Panc1 (cell line): ENCODE measurements at regions of chr1 and their contacts with region 1.

Region 1: DNA sequence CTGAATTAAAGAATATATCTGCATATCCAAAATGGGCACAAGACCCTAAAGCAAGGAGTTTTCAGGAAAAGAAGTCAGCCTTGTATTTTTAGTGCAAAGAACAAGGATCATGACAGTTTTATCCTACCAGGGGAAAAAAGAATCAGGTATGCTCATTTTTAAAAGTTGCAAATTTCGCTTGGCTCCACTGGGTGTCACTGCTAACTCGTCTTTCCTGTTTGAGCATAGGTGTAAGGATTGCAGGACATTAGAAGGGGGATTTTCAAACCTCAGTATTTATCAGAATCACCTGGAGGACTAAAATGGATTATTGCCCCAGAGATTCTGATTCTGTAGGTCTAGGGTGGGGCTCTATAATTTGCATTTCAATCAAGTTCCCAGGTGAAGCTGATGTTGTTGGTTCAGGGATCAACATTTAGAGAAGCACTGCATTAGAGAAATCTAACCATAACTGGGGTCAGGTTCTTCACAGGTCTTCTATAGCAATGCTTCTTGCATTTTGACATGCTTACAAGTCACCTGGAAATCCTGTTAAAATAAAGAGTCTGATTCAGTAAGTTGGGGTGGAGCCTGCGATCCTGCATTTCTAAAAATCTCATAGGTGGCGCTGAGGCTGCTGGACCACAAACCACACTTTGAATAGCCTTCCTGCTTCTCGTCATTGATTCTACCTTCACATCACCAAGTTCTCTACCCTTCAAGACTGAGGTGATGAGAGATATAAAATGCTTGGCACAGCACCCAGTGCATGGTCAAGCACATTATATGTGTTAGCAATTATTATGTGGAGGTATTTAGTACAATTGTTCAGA is 39.6 kb downstream of the NUF2 start:
- DNase-seq: no peak
- ATAC-seq: peak; percentile 84
- H3K4me3 ChIP-seq: no peak overlapping the region
- H3K27ac ChIP-seq: no peak overlapping the region
- H3K4me1 ChIP-seq: no peaks in the 10 kb centered on the region
- H3K27me3 ChIP-seq: no peaks in the 10 kb centered on the region; the same call in 1 of the 2 replicates
- CTCF ChIP-seq: peak; percentile 71

Region 2: DNA sequence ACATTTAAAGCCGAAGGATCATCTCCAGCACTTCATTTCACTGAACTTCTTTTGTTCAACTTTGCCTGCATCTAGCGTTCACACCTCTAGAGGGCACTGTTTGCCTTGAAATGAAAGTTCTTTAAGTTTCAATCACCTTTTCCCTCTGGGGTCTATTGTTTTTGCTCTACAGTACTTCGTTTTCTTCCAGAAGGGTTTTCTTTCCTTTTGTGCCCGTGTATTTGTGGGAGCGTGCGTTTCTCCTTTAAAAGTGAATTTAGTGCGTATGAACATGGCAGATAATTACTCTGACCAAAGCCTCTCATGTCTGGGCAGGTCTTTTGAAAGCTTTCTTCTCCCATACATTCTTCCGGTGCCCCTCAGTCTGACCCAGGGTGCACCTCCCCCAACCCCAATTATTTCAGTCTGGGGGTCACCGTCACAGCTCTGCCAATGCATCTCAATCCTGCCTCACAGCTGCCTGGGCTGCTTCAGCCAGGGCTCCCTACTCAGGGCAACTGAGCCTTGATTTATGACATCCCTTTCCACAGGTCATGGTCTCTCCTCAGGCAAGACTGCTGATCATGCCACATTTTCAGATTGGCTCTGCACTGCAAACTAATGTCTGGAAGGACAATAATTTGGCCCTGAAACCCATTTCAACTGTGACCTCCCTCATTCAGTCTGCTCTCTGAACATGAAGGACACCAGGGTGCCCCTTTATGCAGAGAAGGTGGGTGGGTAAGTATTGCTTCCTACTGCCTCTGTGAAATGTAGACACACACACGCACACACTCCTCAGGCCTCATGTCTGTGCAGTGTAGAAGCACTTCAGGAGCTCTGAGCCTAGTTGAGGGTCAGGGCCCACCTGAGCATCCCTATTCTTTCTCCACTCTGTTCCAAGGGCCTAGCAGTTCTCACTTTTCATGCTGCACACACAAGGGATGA is 49.0 kb after region 1 on chr1:
- CTCF ChIA-PET with region 1: no interaction called
- POLR2A ChIA-PET with region 1: no interaction called
- in situ Hi-C with region 1: no loop called
- intact Hi-C with region 1: no loop called
- DNase-seq: peak; percentile 22
- ATAC-seq: peak; percentile 54; the same call in 1 of the 2 replicates
- H3K4me3 ChIP-seq: no peak overlapping the region
- H3K27ac ChIP-seq: no peak overlapping the region
- H3K4me1 ChIP-seq: no peaks in the 10 kb centered on the region
- H3K27me3 ChIP-seq: no peaks in the 10 kb centered on the region
- CTCF ChIP-seq: peak; percentile 81

Region 3: GRCh38 chr1:163528710-163529348 is 167.5 kb after region 1 on chr1:
- CTCF ChIA-PET with region 1: no interaction called
- POLR2A ChIA-PET with region 1: no interaction called
- in situ Hi-C with region 1: no loop called
- intact Hi-C with region 1: loop called (anchors 5 kb)
- DNase-seq: peak; percentile 10
- ATAC-seq: no peak; the same call in 1 of the 2 replicates
- H3K4me3 ChIP-seq: no peak overlapping the region
- H3K27ac ChIP-seq: no peak overlapping the region
- H3K4me1 ChIP-seq: no peaks in the 10 kb centered on the region
- H3K27me3 ChIP-seq: no peaks in the 10 kb centered on the region
- CTCF ChIP-seq: peak; percentile 65; the same call in 1 of the 2 replicates

Region 4: GRCh38 chr1:165073185-165074007 is 1712.1 kb after region 1 on chr1:
- CTCF ChIA-PET with region 1: no interaction called
- POLR2A ChIA-PET with region 1: no interaction called
- in situ Hi-C with region 1: no loop called
- intact Hi-C with region 1: loop called (anchors 2 kb)
- DNase-seq: peak; percentile 17
- ATAC-seq: peak; percentile 81
- H3K4me3 ChIP-seq: no peak overlapping the region
- H3K27ac ChIP-seq: no peak overlapping the region
- H3K4me1 ChIP-seq: no peaks in the 10 kb centered on the region
- H3K27me3 ChIP-seq: no peaks in the 10 kb centered on the region; the same call in 1 of the 2 replicates
- CTCF ChIP-seq: peak; percentile 78